Activated T-helper 1 cell treated with anti-CD3 and anti-CD28 coated beads, Interleukin-12 subunit alpha, Interleukin-12 subunit beta, Interleukin-2, Interleukin-4 antibody, amounts not matched to agents 30 ng/mL and 10 ng/mL and 1 ng/mL, durations not matched to agents 14 hours and 24 hours and 36 hours (primary cell): ENCODE measurements at regions of chr13 and their contacts with region 1.

Region 1: GRCh38 chr13:24727731-24728601 is 36.0 kb upstream of the RNF17 start:
- DNase-seq: peak; percentile 60
- H3K4me3 Mint-ChIP-seq: no peak overlapping the region
- H3K27ac Mint-ChIP-seq: no peak overlapping the region
- H3K4me1 Mint-ChIP-seq: no peaks in the 10 kb centered on the region
- H3K27me3 Mint-ChIP-seq: peaks cover 19% of the 10 kb centered on the region

Region 2: GRCh38 chr13:24605923-24606372 is 122.0 kb before region 1 on chr13:
- intact Hi-C with region 1: loop called (anchors 10 kb)
- DNase-seq: no peak
- H3K4me3 Mint-ChIP-seq: no peak overlapping the region
- H3K27ac Mint-ChIP-seq: no peak overlapping the region
- H3K4me1 Mint-ChIP-seq: peaks cover 12% of the 10 kb centered on the region
- H3K27me3 Mint-ChIP-seq: peaks cover 2% of the 10 kb centered on the region

Region 3: DNA sequence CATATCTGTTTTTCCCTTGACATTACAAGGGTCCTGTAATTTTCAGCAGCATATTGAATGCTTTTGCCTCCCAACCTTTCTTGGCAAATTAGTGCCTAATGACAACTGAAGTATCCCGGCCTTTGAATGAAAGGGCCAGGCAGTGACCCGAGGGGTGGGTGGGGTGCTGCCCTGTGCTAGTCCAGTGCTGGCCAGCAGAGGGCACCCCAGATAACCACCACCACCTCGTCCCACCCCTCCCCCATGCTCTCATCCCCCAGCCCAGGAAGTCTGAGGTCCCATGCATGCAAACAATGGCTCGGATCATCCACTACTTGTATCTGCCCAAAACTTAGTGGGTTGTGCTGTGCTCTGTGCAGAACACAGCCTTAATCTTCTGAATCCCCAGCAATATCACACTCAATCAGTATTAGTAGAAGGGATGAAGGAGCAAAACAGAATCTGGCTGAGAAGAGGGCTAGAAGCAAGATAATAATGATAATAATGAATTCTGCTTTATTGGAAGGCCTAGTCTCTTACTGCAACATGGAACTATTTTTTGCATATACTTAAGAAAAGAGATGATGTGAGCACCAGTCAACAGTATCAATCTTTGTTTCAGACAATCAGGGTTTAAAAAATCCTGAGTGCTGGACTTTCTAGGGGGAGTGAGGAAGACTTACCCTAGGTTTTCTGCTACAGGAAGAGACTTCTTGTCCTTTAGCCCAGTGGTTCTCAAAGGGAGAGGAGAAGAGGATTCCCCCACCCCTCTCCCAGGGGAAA is 43.9 kb before region 1 on chr13:
- intact Hi-C with region 1: loop called (anchors 1 kb)
- DNase-seq: peak; percentile 30
- H3K4me3 Mint-ChIP-seq: peak overlapping the region; percentile 28
- H3K27ac Mint-ChIP-seq: peak overlapping the region; percentile 57
- H3K4me1 Mint-ChIP-seq: peaks cover 32% of the 10 kb centered on the region
- H3K27me3 Mint-ChIP-seq: peaks cover 45% of the 10 kb centered on the region

Region 4: DNA sequence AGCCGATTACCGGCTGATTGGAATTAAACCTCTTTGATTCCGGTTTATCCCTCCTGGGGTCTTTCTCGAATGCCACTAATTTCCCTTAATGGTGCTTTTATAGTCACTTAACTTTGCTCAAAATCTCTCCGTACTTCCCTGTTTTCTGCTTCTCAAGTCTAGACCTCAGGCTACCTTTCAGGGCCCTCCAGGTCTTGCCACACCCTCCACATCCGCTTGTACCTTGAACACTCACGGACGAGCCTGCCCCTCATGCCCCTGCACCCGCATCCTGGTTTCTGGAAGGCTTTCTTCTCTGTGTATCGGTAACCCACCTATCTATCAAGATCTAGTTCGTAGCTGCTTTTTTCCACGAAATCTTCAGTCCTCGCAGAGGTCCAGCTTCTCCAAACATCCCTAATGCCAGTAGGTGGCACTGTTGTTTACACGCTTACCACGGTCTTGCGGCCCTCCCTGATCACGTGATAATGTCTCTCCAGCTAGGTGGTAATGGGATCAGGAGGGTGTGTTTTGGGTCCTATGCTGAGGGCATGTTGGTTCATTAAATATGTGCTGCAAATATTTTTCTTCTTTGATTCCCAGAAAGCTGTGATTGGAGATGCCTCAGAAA is 34.0 kb before region 1 on chr13:
- intact Hi-C with region 1: loop called (anchors 1 kb)
- DNase-seq: peak; percentile 29
- H3K4me3 Mint-ChIP-seq: no peak overlapping the region
- H3K27ac Mint-ChIP-seq: no peak overlapping the region
- H3K4me1 Mint-ChIP-seq: peaks cover 14% of the 10 kb centered on the region
- H3K27me3 Mint-ChIP-seq: peaks cover 47% of the 10 kb centered on the region